ENCODE measurements at regions of chr3 and their contacts with region 1.

Region 1: GRCh38 chr3:126982471-126983175 is at the start of gene PLXNA1:
- DNase-seq: peak; percentile 87
- total RNA-seq, gene PLXNA1: 31.6 TPM

Region 2: GRCh38 chr3:126679318-126679751 is 303.3 kb before region 1 on chr3:
- intact Hi-C with region 1: loop called (anchors 2 kb)
- DNase-seq: peak; percentile 90

Region 3: GRCh38 chr3:126703512-126704462 is 278.8 kb before region 1 on chr3 and contains the start of gene CHCHD6:
- intact Hi-C with region 1: loop called (anchors 5 kb)
- DNase-seq: peak; percentile 98
- total RNA-seq, gene CHCHD6: 12.1 TPM

Region 4: DNA sequence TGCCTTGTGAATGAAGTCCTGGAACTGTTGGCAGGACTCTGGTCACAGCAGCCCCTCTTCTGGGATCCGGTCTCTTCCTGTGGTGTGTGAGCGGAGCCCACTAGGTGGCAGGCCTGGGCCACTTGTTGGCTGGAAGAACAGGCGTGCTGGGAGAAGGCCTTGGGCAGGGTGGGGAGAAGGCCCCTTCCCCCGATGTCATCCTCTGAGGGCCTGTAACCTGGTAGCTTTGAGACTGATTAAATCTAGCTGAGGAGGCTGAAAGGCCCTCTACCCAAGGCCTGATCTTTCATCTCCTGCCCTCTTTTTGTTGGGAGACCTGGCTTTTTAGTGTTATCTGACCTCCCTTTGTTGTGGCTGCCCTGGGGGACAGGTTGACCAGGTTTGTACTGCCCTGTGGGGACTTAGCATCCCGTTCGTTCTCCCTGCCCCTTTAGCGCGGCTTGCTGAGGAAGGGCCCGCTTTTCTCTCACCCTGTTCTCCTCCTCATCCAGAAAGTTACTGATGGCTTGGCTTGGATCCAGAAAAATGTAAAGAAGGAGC is 230.2 kb before region 1 on chr3:
- intact Hi-C with region 1: loop called (anchors 1 kb)
- DNase-seq: no peak

Region 5: GRCh38 chr3:126961791-126962461 is 20.7 kb before region 1 on chr3:
- intact Hi-C with region 1: loop called (anchors 2 kb)
- DNase-seq: no peak

Region 6: DNA sequence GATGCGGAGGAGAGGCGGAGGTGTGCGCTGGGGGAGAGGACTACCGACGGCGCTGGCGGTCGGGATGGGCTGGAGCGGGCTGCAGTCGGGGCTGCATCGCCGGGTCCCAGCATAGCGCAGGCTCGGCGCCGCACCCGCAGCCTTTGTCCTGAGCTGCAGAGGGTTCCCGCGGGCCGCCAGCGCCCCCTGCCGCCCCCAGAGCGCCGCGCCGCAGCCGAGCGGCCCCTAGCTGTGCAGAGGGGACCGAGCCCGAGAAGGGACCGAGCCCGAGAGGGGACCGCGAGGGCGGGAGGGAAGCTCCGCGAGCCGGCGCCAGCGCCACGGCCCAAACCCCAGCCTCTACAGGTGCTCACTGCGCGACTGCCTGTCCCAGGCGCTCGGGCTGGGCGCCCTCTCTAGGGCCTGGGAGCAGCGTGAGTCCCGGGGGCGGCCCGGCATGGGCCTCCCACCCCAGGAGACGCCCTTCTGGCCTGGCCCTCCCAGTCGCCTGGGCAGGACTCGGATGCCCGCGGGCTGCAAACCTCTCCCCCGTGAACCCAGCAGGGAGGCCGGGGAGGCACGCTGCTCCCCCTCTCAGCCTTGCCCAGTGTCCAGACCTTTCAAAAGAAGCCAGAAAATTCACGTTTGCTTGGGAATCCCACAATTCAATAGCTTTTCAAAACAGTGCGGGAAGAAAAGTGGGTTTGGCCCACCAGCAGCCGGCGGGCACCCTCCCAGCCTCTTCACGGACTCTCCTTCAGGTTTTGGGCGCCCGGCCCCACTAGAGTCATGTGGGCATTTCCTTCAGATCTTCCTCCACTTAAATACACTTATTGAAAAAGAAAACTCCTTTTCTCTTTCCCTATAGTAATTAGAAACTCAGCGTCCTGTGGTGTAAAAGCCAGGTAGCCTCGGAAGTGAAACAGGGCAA is 473.2 kb after region 1 on chr3:
- intact Hi-C with region 1: loop called (anchors 1 kb)
- DNase-seq: peak; percentile 81

Region 7: DNA sequence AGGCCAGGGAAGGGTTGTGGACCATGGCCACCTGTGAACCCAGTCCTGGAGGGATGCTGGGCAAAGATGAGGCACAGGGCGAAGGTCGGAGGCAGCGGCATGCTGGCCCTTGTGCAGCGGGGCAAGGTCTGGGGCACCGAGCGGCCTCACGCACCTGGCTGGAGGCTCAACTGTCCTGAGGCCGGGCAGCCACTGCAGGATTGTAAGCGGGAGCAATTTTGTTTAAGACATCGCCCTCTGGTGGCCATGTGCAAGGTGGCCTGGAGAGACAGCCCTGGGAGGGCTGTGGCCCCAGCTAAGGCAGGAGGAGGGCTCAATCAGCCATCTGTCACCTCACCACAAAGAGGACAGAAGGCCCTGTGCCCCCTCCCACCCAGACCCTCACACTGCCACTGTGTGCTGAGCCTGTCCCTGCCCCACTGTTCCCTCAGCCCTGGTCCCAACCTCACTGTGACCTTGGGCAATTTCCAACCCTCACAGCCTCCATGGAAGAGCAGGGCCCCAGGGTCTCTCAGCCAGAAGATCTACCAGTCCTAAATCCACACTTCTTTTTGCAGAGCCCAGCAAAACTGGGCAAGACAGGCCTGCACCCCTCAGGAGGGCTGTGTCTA is 561.7 kb after region 1 on chr3:
- intact Hi-C with region 1: loop called (anchors 10 kb)
- DNase-seq: peak; percentile 82